Motor neuron (in vitro differentiated cells): ENCODE measurements at regions of chr11 and their contacts with region 1.

Region 1: DNA sequence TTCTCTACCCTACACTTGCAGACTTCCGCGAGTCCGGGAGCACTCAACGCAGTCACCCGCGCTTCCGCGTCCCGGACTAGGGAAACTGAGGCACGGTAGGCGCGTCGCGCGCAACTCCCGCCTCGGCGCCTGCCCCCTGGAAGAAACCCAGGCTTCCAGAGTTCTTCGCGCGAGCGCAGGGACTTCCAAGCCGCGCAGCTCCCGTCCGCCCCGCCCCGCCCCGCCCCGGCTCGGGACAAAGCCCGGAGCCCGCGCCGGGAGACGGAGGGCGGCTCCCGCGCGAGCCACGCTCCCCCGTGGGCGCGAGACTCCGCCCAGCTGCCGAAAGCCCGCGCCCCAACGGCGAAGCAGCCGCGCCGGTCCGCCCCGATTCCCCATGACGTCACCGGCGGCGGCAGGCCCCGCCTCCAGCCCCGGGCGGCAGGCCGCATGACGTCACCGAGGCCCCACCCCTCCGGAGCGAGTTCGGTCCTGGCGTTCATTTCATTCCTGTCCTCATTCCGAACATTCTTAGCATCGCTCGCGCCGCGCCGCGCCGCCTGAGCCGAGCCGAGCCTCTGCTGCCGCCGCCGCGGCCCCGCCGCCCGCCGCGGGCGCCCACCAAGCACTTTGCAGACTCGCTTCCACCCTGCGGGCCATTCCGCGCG is at the start of gene TEAD1:
- ATAC-seq: peak; percentile 84 to 90 (median 89)
- H3K4me3 ChIP-seq: peak within 1 kb of the TSS; percentile 67 to 97 (median 82)
- H3K27ac ChIP-seq: peak within 1 kb of the TSS; percentile 52 to 58
- H3K4me1 ChIP-seq: peaks cover 9 to 18% of the 10 kb centered on the region in 2 donors
- total RNA-seq, gene TEAD1: 18.0 to 125 (median 40.2) TPM

Region 2: DNA sequence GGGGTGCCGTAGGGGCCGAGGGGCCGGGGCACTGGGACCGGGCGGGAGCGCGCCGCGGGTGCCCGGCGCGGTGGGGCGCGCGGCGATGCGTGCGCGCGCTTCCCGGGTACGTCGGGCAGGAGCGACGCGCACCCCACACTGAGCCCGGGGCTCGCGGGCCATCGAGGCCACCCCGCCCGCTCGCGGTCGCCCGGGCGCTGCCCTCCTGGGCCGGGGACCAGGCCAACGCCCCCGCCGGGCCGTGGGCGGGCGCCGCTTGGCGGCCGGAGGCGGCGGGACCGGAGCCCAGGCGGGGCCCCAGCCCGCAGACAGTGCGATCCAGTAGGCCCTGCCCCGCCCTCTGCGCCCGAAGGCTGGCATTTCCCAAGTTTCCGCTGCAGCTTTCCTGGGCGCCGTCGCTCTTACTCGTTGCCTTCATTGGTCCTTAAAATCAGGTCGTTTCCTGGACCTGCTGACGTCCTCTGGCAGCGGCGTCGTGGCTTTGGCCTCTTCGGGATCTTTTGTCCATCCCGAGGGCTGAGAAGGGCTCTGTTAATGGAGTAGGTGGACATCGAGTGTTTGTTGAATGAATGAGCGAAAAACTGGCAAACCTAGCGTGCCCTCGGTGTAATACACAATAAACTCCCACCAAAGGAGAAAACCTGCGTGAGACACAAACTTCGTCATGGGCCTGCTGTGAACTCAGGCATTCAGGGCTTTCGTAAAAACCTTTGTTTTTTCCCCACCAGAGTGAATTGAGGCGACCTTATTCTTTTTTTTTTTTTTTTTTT is 296.0 kb before region 1 on chr11:
- in situ Hi-C with region 1: loop called in 1 of 9 experiments (anchors 25 kb)
- ATAC-seq: peak; percentile 75 to 86 (median 83)
- H3K4me3 ChIP-seq: peak overlapping the region; percentile 51 to 58 (median 55)
- H3K27ac ChIP-seq: peak overlapping the region; percentile 38 to 81
- H3K4me1 ChIP-seq: peaks cover 0 to 4% of the 10 kb centered on the region in 2 donors

Region 3: DNA sequence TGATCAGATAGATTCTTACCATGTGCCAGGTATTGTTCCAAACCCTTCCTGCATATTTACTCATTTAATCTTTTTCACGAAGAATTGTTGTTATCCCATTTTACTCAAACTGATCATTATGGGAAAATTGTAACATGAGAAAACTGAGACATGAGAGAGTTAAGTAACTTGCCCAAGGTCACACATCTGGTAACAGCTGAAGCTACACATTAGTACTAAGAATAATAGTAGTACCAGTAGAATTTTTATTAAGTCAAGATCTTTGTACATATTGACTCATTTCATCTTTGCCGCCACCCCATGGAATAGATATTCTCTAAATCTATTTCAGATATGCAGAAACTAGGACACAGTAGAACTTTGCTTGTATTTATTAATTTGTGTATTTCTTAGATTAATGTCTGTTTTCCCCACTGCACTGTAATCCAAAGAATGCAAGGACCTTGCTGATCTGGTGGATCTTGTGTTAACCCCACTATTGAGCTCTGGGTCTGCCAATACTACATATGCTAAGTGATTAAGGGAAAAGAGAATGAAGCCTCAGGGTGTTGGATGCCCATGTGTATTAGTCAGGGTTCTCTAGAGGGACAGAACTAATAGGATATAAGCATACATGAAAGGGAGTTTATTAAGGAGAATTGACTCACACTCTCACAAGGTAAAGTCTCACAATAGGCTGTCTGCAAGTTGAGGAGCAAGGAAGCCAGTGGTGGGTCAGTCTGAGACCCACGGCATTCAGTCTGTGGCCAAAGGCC is 223.9 kb before region 1 on chr11:
- in situ Hi-C with region 1: no loop called
- ATAC-seq: peak in 3 of 8 experiments; percentile 88 to 96 (median 90)
- H3K4me3 ChIP-seq: no peak overlapping the region
- H3K27ac ChIP-seq: no peak overlapping the region
- H3K4me1 ChIP-seq: no peaks in the 10 kb centered on the region